ENCODE measurements at regions of chr9 and their contacts with region 1.

Region 1: GRCh38 chr9:121321016-121321503 is 49.0 kb downstream of the STOM start:
- DNase-seq: no peak
- ATAC-seq: no peak
- H3K4me3 Mint-ChIP-seq: no peak overlapping the region
- H3K27ac Mint-ChIP-seq: no peak overlapping the region
- H3K4me1 Mint-ChIP-seq: no peaks in the 10 kb centered on the region
- H3K27me3 Mint-ChIP-seq: no peaks in the 10 kb centered on the region
- CTCF ChIP-seq: no peak

Region 2: DNA sequence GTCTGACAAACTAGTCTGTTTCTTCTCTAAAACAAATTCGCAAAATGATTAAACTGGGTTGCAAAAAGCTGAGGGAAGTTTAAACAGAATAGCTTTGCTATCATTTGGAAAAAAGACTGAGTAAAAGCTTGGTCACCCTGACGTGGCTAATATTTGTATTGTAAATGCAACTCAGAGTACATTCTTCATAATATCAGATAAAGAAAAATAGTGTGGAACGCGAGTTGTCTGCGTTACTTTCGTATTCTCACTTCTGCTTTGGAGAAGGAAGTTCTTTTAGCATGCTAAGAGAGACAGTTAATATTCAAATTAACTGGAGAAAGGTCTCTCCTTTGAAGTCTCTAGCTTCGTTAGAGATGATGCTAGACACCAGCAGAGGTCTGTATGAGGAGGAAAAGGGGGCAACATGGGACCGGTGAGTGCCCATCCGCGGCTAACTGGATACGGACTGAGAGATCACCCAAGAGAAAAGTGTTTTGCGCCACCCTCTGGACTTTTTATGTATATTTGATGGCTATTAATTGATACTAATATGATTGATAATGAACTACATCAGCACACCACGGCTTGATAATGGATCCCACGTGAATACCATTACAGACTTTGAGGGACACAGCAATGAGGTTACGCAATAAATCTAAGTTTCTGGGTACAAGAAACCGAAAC is 249.2 kb before region 1 on chr9:
- CTCF ChIA-PET with region 1: no interaction called
- POLR2A ChIA-PET with region 1: no interaction called
- DNase-seq: no peak
- ATAC-seq: no peak
- H3K4me3 Mint-ChIP-seq: no peak overlapping the region
- H3K27ac Mint-ChIP-seq: no peak overlapping the region
- H3K4me1 Mint-ChIP-seq: peaks cover 23% of the 10 kb centered on the region
- H3K27me3 Mint-ChIP-seq: peaks cover 93% of the 10 kb centered on the region
- CTCF ChIP-seq: no peak

Region 3: DNA sequence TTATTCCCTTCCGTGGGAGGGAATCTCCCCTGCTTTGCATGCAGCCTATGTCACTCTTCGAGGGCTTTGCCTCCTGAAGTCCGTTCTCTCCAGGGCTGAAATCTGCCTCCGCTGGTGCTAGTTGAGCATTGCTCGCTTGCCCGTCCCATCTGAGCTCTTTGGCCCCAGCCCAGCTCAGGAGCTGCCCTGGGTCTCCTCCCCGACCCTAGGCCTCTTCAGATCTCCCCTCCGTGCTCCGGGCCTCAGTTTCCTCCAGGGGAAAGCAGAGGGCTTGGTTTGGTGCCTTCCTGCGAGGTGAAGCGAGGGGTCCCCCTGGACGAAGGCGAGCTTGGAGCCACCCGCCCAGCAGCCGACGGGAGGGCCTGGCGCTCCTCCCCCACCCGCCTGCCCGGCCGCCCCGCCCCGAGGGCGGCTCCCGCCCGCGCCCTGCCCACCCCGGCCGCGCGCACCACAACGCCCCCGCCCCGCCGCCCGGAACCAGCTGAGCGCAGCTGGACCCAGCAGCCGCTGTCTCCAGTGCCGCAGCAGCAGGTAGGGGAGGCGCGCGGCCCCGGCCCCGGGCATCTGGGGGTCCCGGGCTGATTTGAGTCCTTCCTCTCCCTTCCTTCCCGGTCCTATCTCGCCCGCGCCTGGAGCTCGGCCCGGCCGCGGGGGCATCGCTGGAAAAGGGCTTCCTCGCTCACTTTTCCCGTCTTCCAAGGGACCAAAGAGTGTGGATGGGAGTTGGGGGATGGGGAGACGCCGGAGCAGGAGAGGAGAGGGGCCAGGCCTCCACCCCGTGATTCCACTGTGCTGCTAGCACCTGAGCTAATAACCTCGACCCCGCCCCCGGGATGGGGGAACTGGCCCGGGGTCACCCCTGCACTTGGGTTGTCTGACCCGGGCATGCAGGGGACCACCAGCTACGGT is 53.1 kb before region 1 on chr9 and contains the start of gene GSN:
- CTCF ChIA-PET with region 1: interaction called, 20 read pairs
- POLR2A ChIA-PET with region 1: interaction called, 3 read pairs
- DNase-seq: peak; percentile 84
- ATAC-seq: peak; percentile 77
- H3K4me3 Mint-ChIP-seq: peak within 1 kb of the TSS; percentile 83
- H3K27ac Mint-ChIP-seq: peak within 1 kb of the TSS; percentile 41
- H3K4me1 Mint-ChIP-seq: peaks cover 51% of the 10 kb centered on the region
- H3K27me3 Mint-ChIP-seq: peaks cover 57% of the 10 kb centered on the region
- CTCF ChIP-seq: no peak
- total RNA-seq, gene GSN: 47.0 to 57.3 TPM (median 54.9 TPM) in 3 replicates

Region 4: GRCh38 chr9:121286973-121287741 is 33.9 kb before region 1 on chr9:
- CTCF ChIA-PET with region 1: interaction called, 16 read pairs
- POLR2A ChIA-PET with region 1: no interaction called
- DNase-seq: peak; percentile 83
- ATAC-seq: peak; percentile 76
- H3K4me3 Mint-ChIP-seq: peak overlapping the region; percentile 49
- H3K27ac Mint-ChIP-seq: peak overlapping the region; percentile 17; the same call in 1 of the 2 replicates
- H3K4me1 Mint-ChIP-seq: peaks cover 45% of the 10 kb centered on the region
- H3K27me3 Mint-ChIP-seq: peaks cover 81% of the 10 kb centered on the region
- CTCF ChIP-seq: no peak

Region 5: GRCh38 chr9:121305269-121305994 is 15.6 kb before region 1 on chr9:
- CTCF ChIA-PET with region 1: interaction called, 20 read pairs
- POLR2A ChIA-PET with region 1: no interaction called
- DNase-seq: no peak
- ATAC-seq: no peak
- H3K4me3 Mint-ChIP-seq: no peak overlapping the region
- H3K27ac Mint-ChIP-seq: no peak overlapping the region
- H3K4me1 Mint-ChIP-seq: peaks cover 3% of the 10 kb centered on the region
- H3K27me3 Mint-ChIP-seq: peaks cover 11% of the 10 kb centered on the region
- CTCF ChIP-seq: no peak

Region 6: GRCh38 chr9:121393318-121393717 is 72.3 kb after region 1 on chr9:
- CTCF ChIA-PET with region 1: interaction called, 42 read pairs
- POLR2A ChIA-PET with region 1: no interaction called
- DNase-seq: no peak
- ATAC-seq: no peak
- H3K4me3 Mint-ChIP-seq: no peak overlapping the region
- H3K27ac Mint-ChIP-seq: no peak overlapping the region
- H3K4me1 Mint-ChIP-seq: peaks cover 14% of the 10 kb centered on the region
- H3K27me3 Mint-ChIP-seq: no peaks in the 10 kb centered on the region
- CTCF ChIP-seq: no peak

Region 7: GRCh38 chr9:121498150-121498486 is 177.1 kb after region 1 on chr9:
- CTCF ChIA-PET with region 1: interaction called, 11 read pairs
- POLR2A ChIA-PET with region 1: no interaction called
- DNase-seq: peak; percentile 61
- ATAC-seq: peak; percentile 67
- H3K4me3 Mint-ChIP-seq: peak overlapping the region; percentile 79
- H3K27ac Mint-ChIP-seq: no peak overlapping the region
- H3K4me1 Mint-ChIP-seq: peaks cover 28% of the 10 kb centered on the region
- H3K27me3 Mint-ChIP-seq: peaks cover 76% of the 10 kb centered on the region
- CTCF ChIP-seq: peak; percentile 63

Region 8: DNA sequence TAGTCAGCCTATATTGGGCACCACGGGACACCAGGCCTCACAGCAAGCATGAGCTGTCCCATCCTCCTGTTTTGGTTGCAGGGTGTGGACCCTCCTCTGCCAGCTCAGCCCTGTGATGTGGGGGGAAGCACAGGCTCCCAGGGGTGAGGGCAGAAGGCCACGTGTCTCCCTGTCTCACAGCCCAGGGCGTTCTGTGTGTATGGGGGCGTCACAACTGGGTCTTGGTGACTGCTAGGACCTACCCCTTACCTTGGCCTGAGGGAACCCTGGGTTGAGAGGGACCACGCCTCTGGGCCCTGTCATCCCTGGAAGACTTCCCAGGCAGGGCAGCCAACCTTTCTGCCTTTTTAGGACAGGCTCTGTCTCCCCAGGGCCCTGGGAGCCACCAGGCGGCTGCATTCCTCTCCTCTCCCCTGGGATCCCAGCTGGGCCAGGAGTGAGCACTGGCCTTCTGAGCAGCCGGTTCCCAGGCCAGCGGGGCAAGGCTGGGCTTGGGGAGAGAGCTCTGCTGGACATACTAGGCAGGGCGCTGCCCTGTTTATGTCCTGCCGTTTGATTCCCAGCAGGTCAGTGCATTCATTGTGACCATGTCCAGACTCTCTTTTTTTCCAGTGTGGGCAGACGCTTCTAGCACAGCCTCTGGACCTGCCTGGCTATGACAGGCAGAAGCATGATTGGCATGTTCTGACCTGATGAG is 427.8 kb after region 1 on chr9:
- CTCF ChIA-PET with region 1: no interaction called
- POLR2A ChIA-PET with region 1: no interaction called
- DNase-seq: no peak
- ATAC-seq: no peak
- H3K4me3 Mint-ChIP-seq: no peak overlapping the region
- H3K27ac Mint-ChIP-seq: peak overlapping the region; percentile 36; the same call in 1 of the 2 replicates
- H3K4me1 Mint-ChIP-seq: peaks cover 13% of the 10 kb centered on the region
- H3K27me3 Mint-ChIP-seq: no peaks in the 10 kb centered on the region
- CTCF ChIP-seq: no peak